HepG2 (cell line): ENCODE measurements at regions of chr19 and their contacts with region 1.

Region 1: DNA sequence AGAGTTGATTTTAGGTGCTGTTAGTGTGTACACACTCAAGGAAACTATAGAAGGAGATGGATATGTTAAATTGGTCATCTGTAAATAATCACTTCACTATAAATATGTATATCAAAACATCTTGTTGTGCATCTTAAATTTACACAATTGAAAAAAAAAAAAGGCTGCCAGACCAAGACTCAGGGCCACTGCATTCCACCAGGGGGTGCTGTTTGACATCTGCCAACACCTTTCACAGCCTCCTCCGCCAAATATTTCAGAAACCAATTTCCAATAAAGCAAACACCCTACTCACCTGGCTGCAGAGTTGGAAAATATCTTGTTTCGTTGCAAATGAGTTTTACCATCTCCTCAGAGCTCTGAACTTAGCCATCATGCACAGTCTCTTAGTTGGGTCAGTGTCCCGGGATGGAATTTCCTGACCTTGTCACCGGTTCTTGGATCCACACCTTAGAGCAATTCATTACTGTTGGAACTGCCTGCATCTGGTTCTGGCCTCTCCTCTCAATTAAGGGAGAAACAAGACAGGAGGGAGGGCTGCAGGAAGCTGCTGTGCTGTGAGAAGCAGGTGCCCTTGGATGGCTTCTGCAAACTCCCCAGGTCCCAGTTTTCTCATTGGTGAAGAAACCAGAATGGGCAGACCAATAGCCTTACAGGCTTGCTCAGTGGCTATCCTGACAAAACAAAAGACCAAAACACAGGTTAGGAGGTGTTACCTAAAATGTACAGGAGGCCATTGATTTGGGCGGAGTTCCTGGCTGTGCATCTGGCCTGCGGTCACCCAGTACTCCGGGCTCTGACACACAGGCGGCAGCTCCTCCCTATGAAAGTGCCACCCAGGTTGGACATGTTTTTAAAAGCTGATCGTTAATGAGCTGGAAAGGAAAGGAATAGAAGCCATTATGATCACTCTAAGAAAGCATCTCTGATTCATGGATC is 746.6 kb downstream of the UQCRFS1 start:
- DNase-seq: peak; percentile 3
- ATAC-seq: no peak
- H3K4me3 ChIP-seq: no peak overlapping the region
- H3K27ac ChIP-seq: no peak overlapping the region
- H3K4me1 ChIP-seq: no peaks in the 10 kb centered on the region
- H3K27me3 ChIP-seq: no peaks in the 10 kb centered on the region; a peak in 1 of 5 replicates
- CTCF ChIP-seq: peak; percentile 45
- EP300 ChIP-seq: no peak
- POLR2A ChIP-seq: no peak
- RAD21 ChIP-seq: no peak

Region 2: DNA sequence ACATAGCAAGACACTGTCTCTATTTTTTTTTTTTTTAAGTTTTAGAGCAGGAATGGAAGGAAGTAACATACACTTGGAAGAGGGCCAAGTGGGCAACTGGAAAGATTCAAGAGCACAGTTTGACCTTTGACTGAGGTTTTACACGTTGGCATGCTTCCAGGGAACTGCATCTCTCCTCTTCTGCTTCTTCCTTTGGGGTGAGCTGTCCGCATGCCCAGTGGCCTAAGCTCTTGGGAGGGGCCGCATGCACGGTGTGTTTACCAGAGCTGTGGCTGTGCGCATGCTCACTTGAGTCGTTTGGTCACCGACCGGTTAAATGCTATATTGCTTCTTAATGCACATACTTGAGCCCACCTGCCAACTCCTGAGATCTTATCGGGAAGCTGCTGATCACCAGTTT is 18.9 kb after region 1 on chr19:
- CTCF ChIA-PET with region 1: no interaction called
- POLR2A ChIA-PET with region 1: no interaction called
- in situ Hi-C with region 1: no loop called
- intact Hi-C with region 1: no loop called
- DNase-seq: no peak
- ATAC-seq: no peak
- H3K4me3 ChIP-seq: no peak overlapping the region
- H3K27ac ChIP-seq: no peak overlapping the region
- H3K4me1 ChIP-seq: no peaks in the 10 kb centered on the region
- H3K27me3 ChIP-seq: no peaks in the 10 kb centered on the region
- CTCF ChIP-seq: no peak
- EP300 ChIP-seq: no peak
- POLR2A ChIP-seq: no peak
- RAD21 ChIP-seq: no peak

Region 3: DNA sequence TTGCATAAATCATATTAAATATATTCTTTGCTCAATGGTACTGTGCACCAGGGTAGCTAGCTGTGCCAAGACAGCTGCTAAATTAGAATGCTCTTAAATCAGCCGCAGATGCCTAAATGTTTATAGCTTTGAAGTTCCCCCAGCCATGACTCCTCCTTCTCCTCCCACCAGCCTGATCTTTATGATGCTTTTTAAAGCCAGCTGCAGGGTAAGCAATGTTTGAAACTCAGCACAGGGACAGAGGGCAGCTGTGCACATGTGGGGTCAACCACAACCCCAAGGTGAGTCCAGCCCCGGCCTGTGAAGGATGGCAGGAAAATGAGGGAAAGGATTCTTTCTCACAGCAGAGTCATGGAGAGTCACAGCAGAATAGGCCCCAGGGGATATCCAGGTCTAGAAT is 110.9 kb after region 1 on chr19:
- CTCF ChIA-PET with region 1: no interaction called
- POLR2A ChIA-PET with region 1: no interaction called
- in situ Hi-C with region 1: no loop called
- intact Hi-C with region 1: no loop called
- DNase-seq: no peak
- ATAC-seq: no peak
- H3K4me3 ChIP-seq: no peak overlapping the region
- H3K27ac ChIP-seq: no peak overlapping the region
- H3K4me1 ChIP-seq: no peaks in the 10 kb centered on the region
- H3K27me3 ChIP-seq: no peaks in the 10 kb centered on the region
- CTCF ChIP-seq: no peak
- EP300 ChIP-seq: no peak
- POLR2A ChIP-seq: no peak
- RAD21 ChIP-seq: no peak

Region 4: GRCh38 chr19:28705008-28705407 is 238.6 kb after region 1 on chr19:
- CTCF ChIA-PET with region 1: interaction called, 11 read pairs
- POLR2A ChIA-PET with region 1: no interaction called
- in situ Hi-C with region 1: loop called (anchors 10 kb)
- intact Hi-C with region 1: no loop called
- DNase-seq: peak; percentile 21
- ATAC-seq: peak; percentile 62
- H3K4me3 ChIP-seq: no peak overlapping the region
- H3K27ac ChIP-seq: no peak overlapping the region
- H3K4me1 ChIP-seq: no peaks in the 10 kb centered on the region
- H3K27me3 ChIP-seq: no peaks in the 10 kb centered on the region
- CTCF ChIP-seq: no peak
- EP300 ChIP-seq: no peak
- POLR2A ChIP-seq: no peak
- RAD21 ChIP-seq: no peak

Region 5: GRCh38 chr19:28710278-28710677 is 243.9 kb after region 1 on chr19:
- CTCF ChIA-PET with region 1: interaction called, 11 read pairs
- POLR2A ChIA-PET with region 1: no interaction called
- in situ Hi-C with region 1: loop called (anchors 10 kb)
- intact Hi-C with region 1: no loop called
- DNase-seq: peak; percentile 43
- ATAC-seq: no peak
- H3K4me3 ChIP-seq: no peak overlapping the region
- H3K27ac ChIP-seq: no peak overlapping the region
- H3K4me1 ChIP-seq: no peaks in the 10 kb centered on the region
- H3K27me3 ChIP-seq: no peaks in the 10 kb centered on the region
- CTCF ChIP-seq: peak; percentile 63
- EP300 ChIP-seq: no peak
- POLR2A ChIP-seq: no peak
- RAD21 ChIP-seq: no peak

Region 6: GRCh38 chr19:28878862-28879566 is 412.6 kb after region 1 on chr19:
- CTCF ChIA-PET with region 1: interaction called, 4 read pairs
- POLR2A ChIA-PET with region 1: no interaction called
- in situ Hi-C with region 1: loop called (anchors 25 kb)
- intact Hi-C with region 1: no loop called
- DNase-seq: peak; percentile 52
- ATAC-seq: peak; percentile 75
- H3K4me3 ChIP-seq: no peak overlapping the region
- H3K27ac ChIP-seq: no peak overlapping the region
- H3K4me1 ChIP-seq: no peaks in the 10 kb centered on the region
- H3K27me3 ChIP-seq: no peaks in the 10 kb centered on the region; a peak in 2 of 5 replicates
- CTCF ChIP-seq: peak; percentile 59
- EP300 ChIP-seq: no peak
- POLR2A ChIP-seq: no peak
- RAD21 ChIP-seq: no peak